ENCODE measurements at regions of chr20 and their contacts with region 1.

Region 1: DNA sequence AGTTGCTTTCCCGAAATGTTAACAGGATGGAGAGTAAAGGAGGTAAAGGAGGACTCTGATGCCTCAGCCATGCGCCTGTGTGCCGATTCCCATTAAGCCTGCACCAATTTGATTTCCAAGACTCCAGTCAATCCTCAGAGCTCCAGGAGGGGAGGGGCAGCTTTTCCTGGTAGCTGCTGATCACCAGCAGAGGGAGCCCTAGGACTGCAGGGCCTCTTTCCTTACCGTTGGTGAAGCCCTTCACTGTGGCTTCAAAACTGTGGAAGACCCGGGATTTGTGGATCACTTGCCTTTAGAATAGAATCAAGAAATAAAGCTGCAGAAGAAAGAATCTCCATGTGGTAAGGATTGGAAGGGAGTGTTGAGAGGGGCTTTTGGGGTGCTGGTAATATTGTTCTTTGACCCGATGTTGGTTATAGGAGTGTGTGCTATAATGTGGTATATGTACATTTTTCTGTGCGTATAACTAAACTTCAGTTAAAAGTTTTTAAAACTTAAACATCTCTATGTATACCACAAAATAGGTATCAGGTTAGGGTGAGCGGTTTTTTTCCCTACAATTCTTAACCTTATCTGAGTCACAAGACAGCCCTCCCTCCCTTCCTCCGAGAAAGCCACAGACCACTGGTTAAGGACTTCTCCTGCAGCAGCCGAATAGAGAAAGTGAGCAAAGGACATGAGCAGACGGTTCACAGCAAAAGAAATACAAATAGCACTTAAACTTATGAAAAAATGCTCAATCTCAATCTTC is 6.9 kb upstream of the OSER1 start:
- DNase-seq: peak; percentile 82 to 85 (median 83)
- ATAC-seq: peak; percentile 84
- H3K4me3 ChIP-seq: no peak overlapping the region
- H3K27ac ChIP-seq: no peak overlapping the region
- H3K4me1 ChIP-seq: peaks cover 29% of the 10 kb centered on the region
- H3K27me3 ChIP-seq: no peaks in the 10 kb centered on the region
- CTCF ChIP-seq: peak; percentile 85 to 94 (median 91)
- POLR2A ChIP-seq: no peak

Region 2: DNA sequence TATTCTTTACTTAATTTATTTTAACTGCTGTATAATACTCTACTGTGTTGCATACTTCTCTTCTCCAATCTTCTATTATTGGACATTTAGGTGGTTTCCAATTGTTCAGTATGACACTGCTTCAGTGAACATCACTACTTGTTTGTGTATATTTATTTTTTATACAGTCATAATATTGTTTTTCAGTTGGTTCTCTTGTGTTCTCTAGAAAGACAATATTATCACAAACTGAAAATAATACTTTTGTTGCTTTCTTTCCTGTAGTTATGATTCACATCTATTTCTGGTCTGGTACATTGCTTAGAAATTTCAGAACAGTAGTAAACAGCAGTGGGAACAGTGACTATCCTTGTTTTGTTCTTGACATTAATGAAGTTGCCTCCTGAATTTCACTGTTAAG is 427.9 kb before region 1 on chr20:
- intact Hi-C with region 1: no loop called
- DNase-seq: no peak
- ATAC-seq: no peak
- H3K4me3 ChIP-seq: no peak overlapping the region
- H3K27ac ChIP-seq: no peak overlapping the region
- H3K4me1 ChIP-seq: no peaks in the 10 kb centered on the region
- H3K27me3 ChIP-seq: no peaks in the 10 kb centered on the region
- CTCF ChIP-seq: no peak
- POLR2A ChIP-seq: no peak

Region 3: GRCh38 chr20:44180814-44181213 is 36.7 kb before region 1 on chr20:
- intact Hi-C with region 1: no loop called
- DNase-seq: no peak
- ATAC-seq: no peak
- H3K4me3 ChIP-seq: no peak overlapping the region
- H3K27ac ChIP-seq: no peak overlapping the region
- H3K4me1 ChIP-seq: no peaks in the 10 kb centered on the region
- H3K27me3 ChIP-seq: no peaks in the 10 kb centered on the region
- CTCF ChIP-seq: no peak
- POLR2A ChIP-seq: no peak

Region 4: GRCh38 chr20:44384423-44385027 is 167.0 kb after region 1 on chr20:
- intact Hi-C with region 1: loop called (anchors 5 kb)
- DNase-seq: peak; percentile 79 to 92 (median 82)
- ATAC-seq: peak; percentile 75
- H3K4me3 ChIP-seq: no peak overlapping the region
- H3K27ac ChIP-seq: no peak overlapping the region
- H3K4me1 ChIP-seq: peaks cover 16% of the 10 kb centered on the region
- H3K27me3 ChIP-seq: no peaks in the 10 kb centered on the region
- CTCF ChIP-seq: peak; percentile 64 to 81 (median 68)
- POLR2A ChIP-seq: no peak

Measured in body of pancreas (tissue), 4 donors.